Dorsolateral prefrontal cortex (tissue), 120 donors: ENCODE measurements at regions of chr2 and their contacts with region 1.

Region 1: GRCh38 chr2:156332534-156333273 is at the start of gene NR4A2:
- DNase-seq: peak; percentile 80 to 93 (median 90)
- H3K4me3 ChIP-seq: peak within 1 kb of the TSS; percentile 59 to 98 (median 88)
- H3K27ac ChIP-seq: peak within 1 kb of the TSS; percentile 89 to 100 (median 99)
- H3K27me3 ChIP-seq: peaks cover 0 to 7% (median 0%) of the 10 kb centered on the region in 45 donors
- CTCF ChIP-seq: peak in 14 of 56 donors; percentile 4 to 38 (median 14)
- total RNA-seq, gene NR4A2: 2.4 to 40.3 (median 11.4) TPM

Region 2: DNA sequence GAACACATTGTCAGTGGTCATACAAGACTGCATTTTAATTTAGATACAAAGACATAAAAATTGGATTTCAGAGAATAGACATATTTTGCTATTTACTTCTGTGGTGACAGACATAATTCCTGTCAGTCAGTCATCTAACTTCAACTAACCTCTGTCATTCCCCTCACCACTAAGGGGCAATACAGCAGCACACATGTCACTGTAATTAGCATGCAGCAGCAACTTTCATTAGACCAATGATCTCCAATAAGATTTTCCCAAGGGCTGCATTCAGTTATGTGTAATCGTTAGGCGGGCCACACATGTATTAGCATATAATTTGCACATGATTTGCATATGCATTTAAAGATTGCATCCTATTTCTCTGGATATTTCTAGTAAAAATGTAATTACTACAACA is 624.6 kb before region 1 on chr2:
- intact Hi-C with region 1: loop called in 1 of 2 experiments (anchors 5 kb)
- DNase-seq: no peak
- H3K4me3 ChIP-seq: no peak overlapping the region
- H3K27ac ChIP-seq: no peak overlapping the region
- H3K27me3 ChIP-seq: no peaks in the 10 kb centered on the region
- CTCF ChIP-seq: peak in 44 of 56 donors; percentile 10 to 67 (median 38)

Region 3: GRCh38 chr2:156192468-156192867 is 140.2 kb before region 1 on chr2:
- intact Hi-C with region 1: no loop called
- DNase-seq: no peak
- H3K4me3 ChIP-seq: no peak overlapping the region
- H3K27ac ChIP-seq: no peak overlapping the region
- H3K27me3 ChIP-seq: peaks cover 0 to 3% (median 0%) of the 10 kb centered on the region in 45 donors
- CTCF ChIP-seq: peak in 9 of 56 donors; percentile 12 to 34 (median 18)

Region 4: DNA sequence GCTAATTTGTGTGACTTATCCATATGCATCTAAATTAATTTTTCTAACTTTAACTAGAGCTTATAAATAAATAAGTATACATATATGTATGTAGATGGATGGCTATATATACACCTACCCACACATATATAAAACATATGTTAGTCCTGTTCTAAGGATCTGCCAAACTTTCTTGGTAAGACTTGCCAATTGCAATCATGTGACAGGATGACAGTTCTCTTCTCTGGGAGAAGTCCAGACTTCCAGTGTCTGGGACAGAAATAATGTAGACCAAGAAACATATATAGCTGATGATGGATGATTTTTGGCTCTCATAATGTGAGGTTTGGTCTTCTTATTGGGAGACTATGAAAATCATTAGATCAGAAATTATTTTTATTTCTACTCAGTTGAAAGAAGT is 30.4 kb after region 1 on chr2:
- intact Hi-C with region 1: no loop called
- DNase-seq: no peak
- H3K4me3 ChIP-seq: no peak overlapping the region
- H3K27ac ChIP-seq: no peak overlapping the region
- H3K27me3 ChIP-seq: no peaks in the 10 kb centered on the region
- CTCF ChIP-seq: no peak

Region 5: DNA sequence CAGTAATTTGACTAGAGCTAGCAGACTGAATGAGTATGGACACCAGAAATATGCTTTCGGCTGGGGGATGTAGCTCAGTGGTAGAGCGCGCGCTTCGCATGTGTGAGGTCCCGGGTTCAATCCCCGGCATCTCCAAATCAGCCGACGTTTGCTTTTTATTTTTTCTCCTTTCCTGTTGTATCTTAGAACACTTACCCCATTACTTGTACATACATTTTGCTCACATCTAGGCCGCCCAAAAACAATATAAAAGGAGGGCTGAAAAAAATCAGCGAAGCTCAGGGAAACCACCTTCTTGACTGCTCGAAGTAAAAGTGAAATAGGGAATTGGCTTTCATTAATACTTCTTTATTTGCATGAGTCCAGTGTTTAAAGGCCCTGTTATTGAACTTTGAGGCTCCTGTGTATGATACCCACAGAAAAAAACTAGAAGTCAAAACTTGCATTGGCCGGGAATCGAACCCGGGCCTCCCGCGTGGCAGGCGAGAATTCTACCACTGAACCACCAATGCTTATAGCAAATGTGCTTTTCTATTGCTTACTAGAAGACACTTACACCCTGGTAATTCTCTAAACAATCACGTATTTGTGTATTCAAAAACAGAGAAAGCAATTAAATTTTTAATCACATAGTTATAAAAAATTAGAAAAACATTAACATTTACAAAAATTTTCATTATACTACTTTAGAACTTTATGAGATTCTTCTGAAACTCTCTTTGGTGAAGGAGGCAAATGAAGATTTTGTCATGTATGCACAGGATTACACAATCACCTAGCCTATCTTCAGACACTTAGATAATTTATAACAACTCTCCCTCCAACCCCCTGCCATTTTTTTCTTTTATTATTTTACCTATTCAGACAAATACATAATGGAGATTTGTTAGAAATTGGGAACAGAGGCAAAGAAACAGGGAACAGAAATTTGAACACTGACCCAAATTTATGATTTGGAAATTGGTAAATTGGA is 68.3 kb after region 1 on chr2:
- intact Hi-C with region 1: loop called in 1 of 2 experiments (anchors 2 kb)
- DNase-seq: peak; percentile 62 to 81 (median 68)
- H3K4me3 ChIP-seq: peak overlapping the region; percentile 56 to 98 (median 76)
- H3K27ac ChIP-seq: peak overlapping the region; percentile 81 to 100 (median 98)
- H3K27me3 ChIP-seq: no peaks in the 10 kb centered on the region
- CTCF ChIP-seq: peak in 5 of 56 donors; percentile 5 to 15 (median 8)

Region 6: GRCh38 chr2:156589381-156590079 is 256.8 kb after region 1 on chr2:
- intact Hi-C with region 1: loop called in 1 of 2 experiments (anchors 5 kb)
- DNase-seq: no peak
- H3K4me3 ChIP-seq: peak overlapping the region in 24 of 59 donors; percentile 2 to 42 (median 24)
- H3K27ac ChIP-seq: peak overlapping the region in 15 of 59 donors; percentile 1 to 63 (median 34)
- H3K27me3 ChIP-seq: no peaks in the 10 kb centered on the region
- CTCF ChIP-seq: peak in 55 of 56 donors; percentile 36 to 84 (median 70)